CD4-positive, alpha-beta T cell (primary cell): ENCODE measurements at regions of chr7 and their contacts with region 1.

Region 1: GRCh38 chr7:43647673-43648472 is 65.0 kb downstream of the STK17A start:
- DNase-seq: peak in 9 of 14 experiments; percentile 32 to 69 (median 50)
- ATAC-seq: peak; percentile 16
- H3K4me3 ChIP-seq: peak overlapping the region; percentile 56
- H3K4me3 Mint-ChIP-seq: peak overlapping the region; percentile 76
- H3K27ac ChIP-seq: peak overlapping the region; percentile 75 to 96
- H3K27ac Mint-ChIP-seq: peak overlapping the region; percentile 87
- H3K4me1 ChIP-seq: peaks cover 97% of the 10 kb centered on the region
- H3K4me1 Mint-ChIP-seq: peaks cover 95% of the 10 kb centered on the region
- H3K27me3 ChIP-seq: no peaks in the 10 kb centered on the region
- H3K27me3 Mint-ChIP-seq: no peaks in the 10 kb centered on the region
- CTCF ChIP-seq: no peak

Region 2: GRCh38 chr7:43454936-43455518 is 192.8 kb before region 1 on chr7:
- CTCF ChIA-PET with region 1: no interaction called
- POLR2A ChIA-PET with region 1: no interaction called
- intact Hi-C with region 1: no loop called
- DNase-seq: peak in 2 of 14 experiments; percentile 13 to 18
- ATAC-seq: no peak
- H3K4me3 ChIP-seq: no peak overlapping the region
- H3K4me3 Mint-ChIP-seq: no peak overlapping the region
- H3K27ac ChIP-seq: no peak overlapping the region
- H3K27ac Mint-ChIP-seq: no peak overlapping the region
- H3K4me1 ChIP-seq: no peaks in the 10 kb centered on the region
- H3K4me1 Mint-ChIP-seq: no peaks in the 10 kb centered on the region
- H3K27me3 ChIP-seq: no peaks in the 10 kb centered on the region
- H3K27me3 Mint-ChIP-seq: peaks cover 11% of the 10 kb centered on the region
- CTCF ChIP-seq: peak; percentile 24

Region 3: GRCh38 chr7:43612599-43613589 is 35.0 kb before region 1 on chr7:
- CTCF ChIA-PET with region 1: no interaction called
- POLR2A ChIA-PET with region 1: interaction called, 32 read pairs
- intact Hi-C with region 1: loop called in 1 of 2 experiments (anchors 5 kb)
- DNase-seq: no peak
- ATAC-seq: peak; percentile 25
- H3K4me3 ChIP-seq: no peak overlapping the region
- H3K4me3 Mint-ChIP-seq: peak overlapping the region; percentile 23
- H3K27ac ChIP-seq: peak overlapping the region; percentile 40 to 44
- H3K27ac Mint-ChIP-seq: peak overlapping the region; percentile 72
- H3K4me1 ChIP-seq: peaks cover 62% of the 10 kb centered on the region
- H3K4me1 Mint-ChIP-seq: peaks cover 55% of the 10 kb centered on the region
- H3K27me3 ChIP-seq: no peaks in the 10 kb centered on the region
- H3K27me3 Mint-ChIP-seq: no peaks in the 10 kb centered on the region
- CTCF ChIP-seq: no peak

Region 4: DNA sequence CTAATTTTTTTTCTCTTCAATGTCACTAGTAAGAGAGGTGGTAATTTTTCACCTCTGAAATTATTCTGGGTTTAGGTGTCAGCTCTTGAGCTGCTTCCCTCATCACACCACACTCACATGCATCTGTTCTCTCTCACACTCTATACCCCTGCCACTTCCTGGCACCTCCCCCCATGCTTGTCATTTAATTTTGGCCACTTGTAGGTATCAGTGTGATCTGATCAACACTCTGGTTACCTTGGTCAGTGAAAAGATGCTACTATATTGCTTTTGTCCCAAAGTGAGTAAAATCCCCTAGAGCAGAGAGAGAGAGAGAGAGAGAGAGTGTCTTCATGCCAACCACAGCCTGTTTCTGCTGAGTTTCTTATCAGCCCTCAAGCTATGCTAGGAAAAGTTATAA is 22.4 kb before region 1 on chr7:
- CTCF ChIA-PET with region 1: interaction called, 7 read pairs
- POLR2A ChIA-PET with region 1: interaction called, 60 read pairs
- intact Hi-C with region 1: loop called (anchors 1 to 2 kb)
- DNase-seq: peak in 8 of 14 experiments; percentile 27 to 85 (median 52)
- ATAC-seq: peak; percentile 69
- H3K4me3 ChIP-seq: no peak overlapping the region
- H3K4me3 Mint-ChIP-seq: peak overlapping the region; percentile 59
- H3K27ac ChIP-seq: peak overlapping the region; percentile 35 to 45
- H3K27ac Mint-ChIP-seq: no peak overlapping the region
- H3K4me1 ChIP-seq: peaks cover 35% of the 10 kb centered on the region
- H3K4me1 Mint-ChIP-seq: peaks cover 97% of the 10 kb centered on the region
- H3K27me3 ChIP-seq: no peaks in the 10 kb centered on the region
- H3K27me3 Mint-ChIP-seq: no peaks in the 10 kb centered on the region
- CTCF ChIP-seq: no peak

Region 5: DNA sequence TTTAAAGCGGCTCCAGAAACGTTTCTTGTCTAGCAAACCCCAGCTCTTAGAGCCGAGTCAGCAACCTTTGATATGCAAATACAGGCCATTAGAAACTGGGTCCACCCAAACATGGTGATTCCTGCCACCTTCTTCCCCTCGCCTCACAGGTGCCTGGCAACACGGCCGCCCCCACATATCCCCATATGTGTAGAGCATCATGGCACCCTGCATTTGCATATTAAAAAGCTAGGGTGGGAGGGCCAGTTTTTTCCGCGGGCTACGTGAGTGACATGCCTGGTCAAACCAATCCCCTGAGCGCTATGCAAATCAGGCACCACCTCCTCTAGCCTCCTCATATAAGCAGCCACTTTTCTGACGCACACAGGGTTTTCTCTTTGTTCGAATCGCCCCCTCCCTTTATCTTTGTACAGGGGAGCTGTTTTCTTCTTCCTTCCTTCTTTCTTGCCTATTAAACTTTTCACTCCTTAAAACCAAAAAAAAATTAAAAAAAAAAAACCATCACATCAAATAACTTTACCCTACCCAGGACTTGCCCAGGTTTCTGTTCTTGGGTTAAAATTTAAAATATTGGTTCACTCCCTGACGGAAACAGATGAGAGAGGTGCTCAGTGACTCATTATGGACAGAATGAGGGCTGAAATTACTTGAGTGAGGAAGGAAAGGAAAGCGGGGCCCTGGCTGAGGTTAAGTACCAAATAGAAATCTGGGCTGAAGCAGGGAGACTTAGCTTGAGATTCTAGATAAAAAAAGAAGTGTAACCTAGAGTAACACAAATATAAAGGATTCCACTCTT is 21.6 kb after region 1 on chr7:
- CTCF ChIA-PET with region 1: no interaction called
- POLR2A ChIA-PET with region 1: interaction called, 27 read pairs
- intact Hi-C with region 1: loop called (anchors 1 to 2 kb)
- DNase-seq: peak; percentile 42 to 92 (median 56)
- ATAC-seq: peak; percentile 82
- H3K4me3 ChIP-seq: peak overlapping the region; percentile 37
- H3K4me3 Mint-ChIP-seq: peak overlapping the region; percentile 82
- H3K27ac ChIP-seq: peak overlapping the region in 1 of 2 donors; percentile 75
- H3K27ac Mint-ChIP-seq: peak overlapping the region; percentile 86
- H3K4me1 ChIP-seq: peaks cover 22% of the 10 kb centered on the region
- H3K4me1 Mint-ChIP-seq: peaks cover 88% of the 10 kb centered on the region
- H3K27me3 ChIP-seq: no peaks in the 10 kb centered on the region
- H3K27me3 Mint-ChIP-seq: no peaks in the 10 kb centered on the region
- CTCF ChIP-seq: no peak

Region 6: DNA sequence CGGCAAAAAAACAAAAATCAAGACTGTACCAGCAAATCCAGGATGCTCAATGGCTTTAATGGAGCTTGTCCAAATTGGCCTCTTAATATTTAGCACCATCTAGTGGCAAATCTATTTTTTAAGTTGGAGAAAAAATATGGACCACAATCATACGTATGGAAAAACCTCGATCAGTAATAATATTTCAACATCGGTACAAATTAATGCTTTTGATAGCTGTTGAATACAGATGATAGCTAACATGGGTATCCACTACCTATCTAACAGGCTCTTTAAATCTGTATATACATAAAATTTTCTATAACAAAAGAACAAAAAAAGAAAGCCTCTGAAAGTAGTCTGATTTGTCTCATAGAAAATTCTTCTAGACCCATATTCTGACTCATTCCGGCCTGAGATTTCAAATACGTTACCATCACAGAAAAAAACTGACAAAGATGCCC is 52.2 kb after region 1 on chr7:
- CTCF ChIA-PET with region 1: interaction called, 58 read pairs
- POLR2A ChIA-PET with region 1: interaction called, 70 read pairs
- intact Hi-C with region 1: loop called (anchors 1 to 2 kb)
- DNase-seq: peak in 3 of 14 experiments; percentile 77 to 80 (median 80)
- ATAC-seq: peak; percentile 76
- H3K4me3 ChIP-seq: no peak overlapping the region
- H3K4me3 Mint-ChIP-seq: peak overlapping the region; percentile 52
- H3K27ac ChIP-seq: peak overlapping the region in 1 of 2 donors; percentile 4
- H3K27ac Mint-ChIP-seq: peak overlapping the region; percentile 66
- H3K4me1 ChIP-seq: peaks cover 6% of the 10 kb centered on the region
- H3K4me1 Mint-ChIP-seq: peaks cover 58% of the 10 kb centered on the region
- H3K27me3 ChIP-seq: no peaks in the 10 kb centered on the region
- H3K27me3 Mint-ChIP-seq: no peaks in the 10 kb centered on the region
- CTCF ChIP-seq: peak; percentile 83